ENCODE measurements at regions of chr19 and their contacts with region 1.

Region 1: DNA sequence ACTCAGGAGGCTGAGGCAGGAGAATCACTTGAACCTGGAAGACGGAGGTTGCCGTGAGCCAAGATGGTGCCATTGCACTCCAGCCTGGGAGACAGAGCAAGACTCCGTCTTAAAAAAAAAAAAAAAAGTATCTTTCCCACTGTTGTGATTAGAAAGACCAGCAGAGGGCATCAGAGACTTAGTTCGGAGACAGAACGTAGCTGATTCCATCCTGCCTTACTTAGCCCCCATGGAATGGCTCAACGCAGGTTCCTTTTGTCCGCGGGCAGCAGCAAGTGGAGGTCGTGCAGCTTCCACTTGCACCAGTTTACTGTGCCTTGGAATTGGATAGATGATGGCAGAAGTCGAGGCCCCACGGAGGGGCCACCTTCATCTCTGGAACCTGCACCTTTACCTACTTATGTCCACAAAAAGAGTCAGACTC is 8.1 kb downstream of the TIMM29 start:
- DNase-seq: no peak
- H3K4me3 ChIP-seq: no peak overlapping the region
- H3K27ac ChIP-seq: no peak overlapping the region
- H3K4me1 ChIP-seq: no peaks in the 10 kb centered on the region; a peak in 1 of 7 replicates
- H3K27me3 ChIP-seq: no peaks in the 10 kb centered on the region
- CTCF ChIP-seq: peak in 2 of 3 experiments; percentile 69 to 72; a peak in 3 of 4 replicates
- EP300 ChIP-seq: no peak
- POLR2A ChIP-seq: peak in 1 of 2 experiments; percentile 56; a peak in 1 of 3 replicates
- RAD21 ChIP-seq: peak; percentile 76 to 78

Region 2: DNA sequence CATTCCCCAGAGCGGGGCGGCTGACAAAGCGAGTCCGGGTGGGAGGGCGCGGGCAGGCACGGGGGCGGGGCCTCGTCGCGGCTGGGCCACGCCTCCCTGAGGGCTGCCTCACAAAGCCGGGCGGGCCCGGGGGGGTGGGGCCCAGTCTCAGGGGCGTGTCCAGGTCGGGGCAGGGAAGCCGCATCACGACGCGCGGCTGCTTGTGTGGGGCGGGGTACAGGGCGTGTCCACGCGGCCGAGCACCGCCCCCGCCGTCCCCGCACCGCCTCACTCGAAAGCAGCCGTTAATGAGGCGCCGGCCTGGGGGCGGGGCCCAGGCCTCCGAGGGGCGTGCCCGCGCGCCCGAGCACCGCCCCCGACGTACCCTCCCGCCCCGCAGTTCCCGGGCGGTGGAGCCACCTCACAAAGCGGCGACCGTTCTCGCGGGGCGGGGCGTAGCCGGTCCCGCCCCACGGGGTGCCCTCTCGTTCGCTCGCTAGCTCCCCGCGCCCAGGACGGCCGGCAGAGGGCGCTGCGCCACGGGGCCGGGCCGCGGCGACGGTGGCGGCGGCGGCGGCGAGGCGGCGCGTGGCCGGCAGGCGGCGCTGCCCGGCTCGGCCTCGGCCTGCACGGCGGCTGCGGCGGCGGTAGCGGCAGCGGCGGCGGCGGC is 65.6 kb before region 1 on chr19 and contains the start of gene CARM1:
- CTCF ChIA-PET with region 1: interaction called, 10 read pairs
- POLR2A ChIA-PET with region 1: no interaction called
- DNase-seq: peak in 1 of 2 experiments; percentile 99
- H3K4me3 ChIP-seq: peak within 1 kb of the TSS; percentile 65 to 94 (median 76)
- H3K27ac ChIP-seq: peak within 1 kb of the TSS; percentile 86
- H3K4me1 ChIP-seq: peaks cover 0 to 12% (median 2%) of the 10 kb centered on the region in 4 experiments; a peak in 5 of 7 replicates
- H3K27me3 ChIP-seq: no peaks in the 10 kb centered on the region
- CTCF ChIP-seq: peak; percentile 72 to 97 (median 95)
- EP300 ChIP-seq: peak in 1 of 2 experiments; percentile 46; a peak in 1 of 3 replicates
- POLR2A ChIP-seq: no peak
- RAD21 ChIP-seq: peak; percentile 37 to 70; a peak in 3 of 4 replicates
- total RNA-seq, gene CARM1: 134 and 136 TPM in 2 replicates

Region 3: DNA sequence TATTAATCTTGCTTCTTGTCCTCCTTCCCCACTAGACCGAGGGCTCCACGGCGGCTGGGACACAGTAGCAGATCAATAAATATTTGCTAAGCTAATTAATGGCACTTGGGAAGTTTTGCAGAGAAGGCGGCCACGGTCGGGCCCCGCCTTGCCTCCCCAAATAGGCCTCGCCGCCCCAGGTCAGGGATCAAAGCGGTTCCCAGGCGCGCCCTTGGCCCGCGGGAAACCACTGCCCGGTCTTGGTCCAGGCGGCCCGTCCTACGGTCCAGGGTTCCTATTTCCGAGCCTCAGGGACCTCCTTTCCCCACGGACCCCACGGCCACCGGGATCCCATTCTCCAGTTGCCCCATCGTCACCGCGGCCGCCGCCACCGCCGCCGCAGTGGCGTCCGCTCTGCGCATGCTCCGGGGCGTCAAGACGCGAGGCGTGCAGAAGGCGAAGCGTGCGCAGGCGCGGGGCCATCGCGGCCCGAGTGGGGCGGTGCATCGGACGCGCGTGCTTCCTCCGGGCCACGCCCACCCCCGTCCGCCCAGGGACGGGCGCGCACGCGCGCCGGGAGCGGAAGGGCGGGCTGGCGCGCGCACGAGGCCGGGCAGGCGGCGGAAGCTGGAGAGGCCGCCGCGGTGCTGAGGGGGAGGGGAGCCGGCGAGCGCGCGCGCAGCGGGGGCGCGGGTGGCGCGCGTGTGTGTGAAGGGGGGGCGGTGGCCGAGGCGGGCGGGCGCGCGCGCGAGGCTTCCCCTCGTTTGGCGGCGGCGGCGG is 23.8 kb after region 1 on chr19 and contains the start of gene SMARCA4:
- CTCF ChIA-PET with region 1: interaction called, 110 read pairs
- POLR2A ChIA-PET with region 1: interaction called, 24 read pairs
- DNase-seq: peak; percentile 88 to 96
- H3K4me3 ChIP-seq: peak within 1 kb of the TSS; percentile 98 to 100 (median 99)
- H3K27ac ChIP-seq: peak within 1 kb of the TSS; percentile 85
- H3K4me1 ChIP-seq: peaks cover 0 to 12% (median 6%) of the 10 kb centered on the region in 4 experiments; a peak in 6 of 7 replicates
- H3K27me3 ChIP-seq: no peaks in the 10 kb centered on the region
- CTCF ChIP-seq: no peak
- EP300 ChIP-seq: peak in 1 of 2 experiments; percentile 17; a peak in 1 of 3 replicates
- POLR2A ChIP-seq: peak in 1 of 2 experiments; percentile 65; a peak in 1 of 3 replicates
- RAD21 ChIP-seq: no peak
- total RNA-seq, gene SMARCA4: 263 TPM in 2 replicates

Region 4: GRCh38 chr19:10988921-10989320 is 52.2 kb after region 1 on chr19:
- CTCF ChIA-PET with region 1: interaction called, 14 read pairs
- POLR2A ChIA-PET with region 1: no interaction called
- DNase-seq: no peak
- H3K4me3 ChIP-seq: no peak overlapping the region
- H3K27ac ChIP-seq: no peak overlapping the region
- H3K4me1 ChIP-seq: no peaks in the 10 kb centered on the region
- H3K27me3 ChIP-seq: no peaks in the 10 kb centered on the region
- CTCF ChIP-seq: no peak
- EP300 ChIP-seq: no peak
- POLR2A ChIP-seq: no peak
- RAD21 ChIP-seq: no peak

Region 5: GRCh38 chr19:11025445-11025844 is 88.8 kb after region 1 on chr19:
- CTCF ChIA-PET with region 1: interaction called, 15 read pairs
- POLR2A ChIA-PET with region 1: interaction called, 3 read pairs
- DNase-seq: no peak
- H3K4me3 ChIP-seq: no peak overlapping the region
- H3K27ac ChIP-seq: no peak overlapping the region
- H3K4me1 ChIP-seq: no peaks in the 10 kb centered on the region
- H3K27me3 ChIP-seq: no peaks in the 10 kb centered on the region
- CTCF ChIP-seq: no peak
- EP300 ChIP-seq: no peak
- POLR2A ChIP-seq: no peak
- RAD21 ChIP-seq: no peak

Region 6: DNA sequence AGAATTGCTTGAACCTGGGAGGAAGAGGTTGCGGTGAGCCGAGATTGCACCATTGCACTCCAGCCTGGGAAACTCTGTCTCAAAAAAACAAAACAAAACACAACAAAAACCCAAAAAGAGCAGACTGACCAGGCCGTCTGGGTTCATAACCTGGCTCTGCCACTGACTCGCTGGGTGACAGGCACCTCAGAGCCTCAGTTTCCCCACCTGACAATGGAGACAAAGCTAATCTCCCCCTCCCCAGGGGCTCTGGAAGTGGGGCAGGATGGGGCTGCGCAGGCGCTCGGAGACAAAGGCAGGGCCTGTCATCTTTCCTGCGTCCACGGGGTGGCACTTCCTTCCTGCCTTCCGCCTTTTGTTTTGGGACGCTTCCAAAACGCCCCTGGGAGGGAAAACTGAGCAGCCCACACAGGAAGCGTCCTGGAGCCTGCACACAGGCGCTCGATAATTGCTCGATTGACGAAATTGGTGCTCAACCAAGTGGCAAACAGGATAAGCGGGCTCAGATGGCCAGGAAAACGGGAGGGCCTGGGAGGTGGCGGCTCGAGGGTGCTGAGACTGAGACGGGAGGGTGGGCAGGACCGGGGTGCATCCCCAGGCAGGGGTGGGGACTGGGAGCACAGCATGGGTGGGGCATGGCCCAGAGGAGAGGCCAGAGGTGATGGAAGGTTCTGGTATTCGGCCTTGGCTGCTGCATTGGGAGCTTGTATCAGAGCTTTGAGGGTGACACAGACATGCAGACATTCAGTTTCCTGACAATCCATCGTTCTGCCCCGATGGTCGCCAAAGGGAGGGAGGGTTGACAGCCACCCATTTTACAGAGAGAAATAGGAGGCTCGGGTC is 201.1 kb after region 1 on chr19:
- CTCF ChIA-PET with region 1: no interaction called
- POLR2A ChIA-PET with region 1: no interaction called
- DNase-seq: peak in 1 of 2 experiments; percentile 79
- H3K4me3 ChIP-seq: peak overlapping the region; percentile 9 to 57 (median 28); a peak in 6 of 8 replicates
- H3K27ac ChIP-seq: no peak overlapping the region
- H3K4me1 ChIP-seq: peaks cover 0 to 17% (median 13%) of the 10 kb centered on the region in 4 experiments; a peak in 6 of 7 replicates
- H3K27me3 ChIP-seq: no peaks in the 10 kb centered on the region
- CTCF ChIP-seq: peak; percentile 62 to 71 (median 69)
- EP300 ChIP-seq: no peak
- POLR2A ChIP-seq: no peak
- RAD21 ChIP-seq: peak; percentile 74 to 76

Measured in H1 (cell line).